CD4-positive, alpha-beta T cell (primary cell): ENCODE measurements at regions of chr9 and their contacts with region 1.

Region 1: GRCh38 chr9:124868511-124869465 is 6.9 kb downstream of the ARPC5L start:
- DNase-seq: peak; percentile 76 to 95 (median 87)
- ATAC-seq: peak; percentile 75
- H3K4me3 ChIP-seq: peak overlapping the region; percentile 84
- H3K4me3 Mint-ChIP-seq: peak overlapping the region; percentile 92
- H3K27ac ChIP-seq: peak overlapping the region; percentile 93 to 96
- H3K27ac Mint-ChIP-seq: peak overlapping the region; percentile 92
- H3K4me1 ChIP-seq: peaks cover 58% of the 10 kb centered on the region
- H3K4me1 Mint-ChIP-seq: peaks cover 56% of the 10 kb centered on the region
- H3K27me3 ChIP-seq: no peaks in the 10 kb centered on the region
- H3K27me3 Mint-ChIP-seq: no peaks in the 10 kb centered on the region
- CTCF ChIP-seq: no peak

Region 2: DNA sequence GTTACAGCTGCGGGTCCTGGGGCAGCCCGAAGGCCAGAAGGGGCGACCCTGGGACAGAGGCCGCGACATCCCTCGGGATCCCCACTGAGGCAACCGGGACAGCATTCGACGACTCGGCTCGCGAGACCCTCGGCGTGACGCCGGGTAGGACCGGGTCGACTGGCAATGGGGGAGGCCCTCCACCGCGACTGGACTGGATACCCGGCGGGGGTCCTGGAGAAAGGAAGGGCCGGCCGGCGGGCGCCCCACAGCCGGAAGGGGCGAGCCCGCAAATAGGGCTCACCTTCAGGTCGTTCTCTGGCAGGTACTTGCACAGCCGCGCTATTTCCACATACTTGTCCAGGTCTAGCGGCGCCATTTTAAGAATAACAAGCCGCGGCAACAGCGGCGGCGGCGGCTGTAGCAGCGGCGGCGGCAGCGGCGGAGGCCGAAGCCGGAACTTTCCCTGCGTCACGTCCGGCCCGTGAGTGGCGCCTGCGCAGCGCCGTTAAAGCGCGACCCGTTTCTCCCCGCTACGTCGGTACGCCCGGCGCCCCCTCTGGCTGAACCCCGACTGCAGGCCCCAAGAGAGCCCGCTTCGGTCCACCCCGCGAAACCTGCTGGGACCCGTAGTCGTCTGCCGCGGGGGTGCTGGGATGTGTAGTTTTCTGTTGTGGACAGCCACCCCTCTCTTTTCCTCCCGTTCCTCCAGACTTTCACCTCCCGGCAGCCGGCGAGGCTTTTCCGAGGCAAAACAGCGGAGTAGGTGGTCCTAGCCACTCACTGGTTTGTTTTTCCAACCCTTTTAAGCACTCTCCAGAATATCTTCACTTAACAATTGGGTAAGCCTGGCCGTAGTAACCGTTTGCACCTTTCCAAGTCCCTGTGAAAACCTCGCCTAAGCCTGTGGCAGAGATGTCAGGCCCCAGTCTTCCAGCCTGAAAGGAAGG is 320.8 kb after region 1 on chr9 and contains the start of gene PPP6C:
- CTCF ChIA-PET with region 1: no interaction called
- POLR2A ChIA-PET with region 1: no interaction called
- intact Hi-C with region 1: loop called in 1 of 2 experiments (anchors 5 kb)
- DNase-seq: peak; percentile 95 to 99 (median 97)
- ATAC-seq: peak; percentile 92
- H3K4me3 ChIP-seq: peak within 1 kb of the TSS; percentile 100
- H3K4me3 Mint-ChIP-seq: peak within 1 kb of the TSS; percentile 91
- H3K27ac ChIP-seq: peak within 1 kb of the TSS; percentile 95 to 98
- H3K27ac Mint-ChIP-seq: peak within 1 kb of the TSS; percentile 96
- H3K4me1 ChIP-seq: peaks cover 77% of the 10 kb centered on the region
- H3K4me1 Mint-ChIP-seq: peaks cover 73% of the 10 kb centered on the region
- H3K27me3 ChIP-seq: no peaks in the 10 kb centered on the region
- H3K27me3 Mint-ChIP-seq: no peaks in the 10 kb centered on the region
- CTCF ChIP-seq: peak; percentile 63
- total RNA-seq, gene PPP6C: 32.9 to 35.3 TPM